ENCODE measurements at regions of chr1 and their contacts with region 1.

Region 1: GRCh38 chr1:157725221-157725577 is 24.6 kb upstream of the FCRL3 start:
- DNase-seq: peak in 1 of 2 donors; percentile 57
- ATAC-seq: peak; percentile 16 to 53 (median 40)
- H3K4me3 ChIP-seq: no peak overlapping the region
- H3K4me3 Mint-ChIP-seq: peak overlapping the region; percentile 69
- H3K27ac ChIP-seq: peak overlapping the region; percentile 71
- H3K27ac Mint-ChIP-seq: peak overlapping the region; percentile 84 to 92
- H3K4me1 ChIP-seq: peaks cover 42% of the 10 kb centered on the region
- H3K4me1 Mint-ChIP-seq: peaks cover 76 to 80% of the 10 kb centered on the region in 2 donors
- H3K27me3 ChIP-seq: no peaks in the 10 kb centered on the region
- H3K27me3 Mint-ChIP-seq: no peaks in the 10 kb centered on the region
- CTCF ChIP-seq: no peak

Region 2: DNA sequence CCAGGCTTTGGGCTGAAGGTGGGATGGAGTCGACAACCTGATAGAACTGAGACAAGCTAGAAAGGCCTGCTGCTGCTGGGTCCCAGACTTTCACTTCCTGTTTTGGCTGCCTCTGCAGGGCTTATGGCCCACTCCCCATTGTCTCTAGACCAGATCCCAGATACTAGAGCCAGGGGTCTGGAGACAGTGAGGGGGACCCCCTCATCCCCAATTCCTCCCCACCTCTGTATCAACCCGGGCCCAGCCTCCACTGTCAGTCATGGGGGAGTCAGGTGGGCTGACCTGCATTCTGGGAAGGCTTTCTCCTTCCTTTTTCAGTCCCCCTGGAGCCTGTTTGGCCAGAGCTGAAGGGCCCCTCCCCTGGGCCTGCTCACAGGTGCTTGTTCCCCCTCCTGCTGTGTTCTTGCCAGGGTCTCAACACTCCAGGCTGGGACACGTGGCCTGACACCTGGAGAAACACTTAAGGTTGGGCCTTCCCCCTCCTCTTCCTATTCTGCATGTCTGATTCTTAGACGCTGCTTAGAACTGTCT is 607.6 kb before region 1 on chr1:
- intact Hi-C with region 1: no loop called
- DNase-seq: no peak
- ATAC-seq: no peak
- H3K4me3 ChIP-seq: no peak overlapping the region
- H3K4me3 Mint-ChIP-seq: no peak overlapping the region
- H3K27ac ChIP-seq: no peak overlapping the region
- H3K27ac Mint-ChIP-seq: no peak overlapping the region
- H3K4me1 ChIP-seq: no peaks in the 10 kb centered on the region
- H3K4me1 Mint-ChIP-seq: peaks cover 11 to 19% of the 10 kb centered on the region in 2 donors
- H3K27me3 ChIP-seq: no peaks in the 10 kb centered on the region
- H3K27me3 Mint-ChIP-seq: peaks cover 3 to 5% of the 10 kb centered on the region in 2 donors
- CTCF ChIP-seq: no peak

Region 3: DNA sequence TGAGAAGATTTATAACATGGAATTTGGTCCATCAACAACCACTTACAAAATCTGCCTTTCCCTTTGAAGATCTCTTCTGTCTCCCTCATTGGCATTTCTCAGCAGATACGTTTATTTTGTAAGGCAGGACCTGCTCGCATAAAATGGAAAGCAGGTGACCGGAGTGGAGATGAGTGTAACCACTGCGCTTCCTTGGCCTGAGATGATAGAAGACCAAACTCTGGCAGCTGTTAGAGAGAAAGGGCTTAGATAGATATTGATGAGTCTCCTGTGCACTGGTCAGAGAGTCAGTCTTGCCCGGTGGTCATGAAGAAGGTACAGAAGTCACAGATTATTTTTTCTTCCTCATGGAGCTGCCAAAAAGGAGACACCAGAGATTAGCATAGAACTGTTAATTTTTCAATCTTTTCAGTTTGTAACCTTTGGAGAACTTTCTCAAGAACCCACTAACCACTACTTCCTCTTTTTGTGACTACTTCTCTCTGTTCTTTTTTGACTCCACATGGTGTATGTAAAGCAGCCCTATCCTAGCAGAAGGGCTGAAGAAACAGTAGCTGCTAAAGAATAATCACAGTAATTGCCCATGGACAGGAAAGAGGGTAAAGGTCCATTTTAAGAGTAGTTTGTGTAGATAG is 72.2 kb before region 1 on chr1:
- intact Hi-C with region 1: no loop called
- DNase-seq: no peak
- ATAC-seq: peak in 2 of 3 donors; percentile 29 to 67
- H3K4me3 ChIP-seq: no peak overlapping the region
- H3K4me3 Mint-ChIP-seq: no peak overlapping the region
- H3K27ac ChIP-seq: no peak overlapping the region
- H3K27ac Mint-ChIP-seq: peak overlapping the region in 1 of 2 donors; percentile 1
- H3K4me1 ChIP-seq: peaks cover 6% of the 10 kb centered on the region
- H3K4me1 Mint-ChIP-seq: peaks cover 10% of the 10 kb centered on the region in 2 donors
- H3K27me3 ChIP-seq: peaks cover 9% of the 10 kb centered on the region
- H3K27me3 Mint-ChIP-seq: peaks cover 8 to 10% of the 10 kb centered on the region in 2 donors
- CTCF ChIP-seq: no peak

Region 4: DNA sequence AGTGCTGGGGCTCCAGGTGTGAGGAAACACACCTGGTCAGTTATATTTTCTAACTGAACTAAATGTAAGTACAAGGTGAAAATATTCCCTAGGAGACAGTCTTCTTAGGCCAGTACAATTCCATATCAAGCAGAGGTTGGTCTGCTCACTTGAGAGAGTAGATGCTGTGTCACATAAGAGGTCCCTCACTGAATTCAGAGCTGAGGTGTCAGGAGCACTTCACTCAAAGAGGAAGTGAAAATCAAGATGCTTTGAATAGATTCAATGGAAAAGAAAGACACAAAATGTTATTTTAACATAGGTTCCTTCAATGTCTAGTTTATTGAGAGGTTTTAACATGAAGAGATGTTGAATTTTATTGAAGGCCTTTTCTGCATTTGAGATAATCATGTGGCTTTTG is 20.3 kb before region 1 on chr1:
- intact Hi-C with region 1: loop called (anchors 1 kb)
- DNase-seq: no peak
- ATAC-seq: no peak
- H3K4me3 ChIP-seq: no peak overlapping the region
- H3K4me3 Mint-ChIP-seq: no peak overlapping the region
- H3K27ac ChIP-seq: peak overlapping the region; percentile 60
- H3K27ac Mint-ChIP-seq: peak overlapping the region; percentile 81 to 84
- H3K4me1 ChIP-seq: peaks cover 28% of the 10 kb centered on the region
- H3K4me1 Mint-ChIP-seq: peaks cover 69 to 71% of the 10 kb centered on the region in 2 donors
- H3K27me3 ChIP-seq: no peaks in the 10 kb centered on the region
- H3K27me3 Mint-ChIP-seq: no peaks in the 10 kb centered on the region
- CTCF ChIP-seq: no peak

Region 5: GRCh38 chr1:157758018-157758417 is 32.8 kb after region 1 on chr1:
- intact Hi-C with region 1: no loop called
- DNase-seq: no peak
- ATAC-seq: no peak
- H3K4me3 ChIP-seq: no peak overlapping the region
- H3K4me3 Mint-ChIP-seq: no peak overlapping the region
- H3K27ac ChIP-seq: no peak overlapping the region
- H3K27ac Mint-ChIP-seq: no peak overlapping the region
- H3K4me1 ChIP-seq: peaks cover 1% of the 10 kb centered on the region
- H3K4me1 Mint-ChIP-seq: peaks cover 8 to 14% of the 10 kb centered on the region in 2 donors
- H3K27me3 ChIP-seq: no peaks in the 10 kb centered on the region
- H3K27me3 Mint-ChIP-seq: no peaks in the 10 kb centered on the region
- CTCF ChIP-seq: no peak

Region 6: GRCh38 chr1:157773493-157774350 is 48.5 kb after region 1 on chr1:
- intact Hi-C with region 1: loop called (anchors 10 kb)
- DNase-seq: peak in 1 of 2 donors; percentile 53
- ATAC-seq: peak; percentile 76 to 97 (median 93)
- H3K4me3 ChIP-seq: no peak overlapping the region
- H3K4me3 Mint-ChIP-seq: no peak overlapping the region
- H3K27ac ChIP-seq: no peak overlapping the region
- H3K27ac Mint-ChIP-seq: peak overlapping the region in 1 of 2 donors; percentile 63
- H3K4me1 ChIP-seq: peaks cover 35% of the 10 kb centered on the region
- H3K4me1 Mint-ChIP-seq: peaks cover 39 to 46% of the 10 kb centered on the region in 2 donors
- H3K27me3 ChIP-seq: no peaks in the 10 kb centered on the region
- H3K27me3 Mint-ChIP-seq: no peaks in the 10 kb centered on the region
- CTCF ChIP-seq: peak; percentile 76

Region 7: GRCh38 chr1:158931055-158931737 is 1206.0 kb after region 1 on chr1 and contains the start of gene PYHIN1:
- intact Hi-C with region 1: loop called (anchors 10 kb)
- DNase-seq: peak in 1 of 2 donors; percentile 71
- ATAC-seq: peak; percentile 70 to 86 (median 76)
- H3K4me3 ChIP-seq: peak within 1 kb of the TSS; percentile 75
- H3K4me3 Mint-ChIP-seq: peak within 1 kb of the TSS; percentile 98
- H3K27ac ChIP-seq: peak within 1 kb of the TSS; percentile 90
- H3K27ac Mint-ChIP-seq: peak within 1 kb of the TSS; percentile 90 to 95
- H3K4me1 ChIP-seq: peaks cover 24% of the 10 kb centered on the region
- H3K4me1 Mint-ChIP-seq: peaks cover 55 to 64% of the 10 kb centered on the region in 2 donors
- H3K27me3 ChIP-seq: no peaks in the 10 kb centered on the region
- H3K27me3 Mint-ChIP-seq: no peaks in the 10 kb centered on the region
- CTCF ChIP-seq: no peak
- total RNA-seq, gene PYHIN1: 171 to 313 (median 197) TPM